Naive thymus-derived CD4-positive, alpha-beta T cell (primary cell): ENCODE measurements at regions of chr2 and their contacts with region 1.

Region 1: GRCh38 chr2:7427293-7428060 is 510.3 kb downstream of the RNF144A start:
- DNase-seq: peak in 7 of 9 donors; percentile 37 to 73 (median 63)
- ATAC-seq: peak; percentile 70
- H3K4me3 ChIP-seq: no peak overlapping the region
- H3K4me3 Mint-ChIP-seq: peak overlapping the region in 6 of 10 donors; percentile 0 to 87 (median 38)
- H3K27ac ChIP-seq: no peak overlapping the region
- H3K27ac Mint-ChIP-seq: peak overlapping the region in 7 of 9 donors; percentile 3 to 98 (median 78)
- H3K4me1 ChIP-seq: peaks cover 0 to 29% of the 10 kb centered on the region in 2 donors
- H3K4me1 Mint-ChIP-seq: peaks cover 26 to 49% (median 46%) of the 10 kb centered on the region in 7 donors
- H3K27me3 ChIP-seq: no peaks in the 10 kb centered on the region
- H3K27me3 Mint-ChIP-seq: peaks cover 0 to 6% (median 3%) of the 10 kb centered on the region in 5 donors

Region 2: GRCh38 chr2:6877402-6878304 is 549.8 kb before region 1 on chr2 and contains the start of gene RSAD2:
- CTCF ChIA-PET with region 1: no interaction called
- POLR2A ChIA-PET with region 1: no interaction called
- intact Hi-C with region 1: no loop called
- DNase-seq: peak in 8 of 9 donors; percentile 29 to 73 (median 64)
- ATAC-seq: peak; percentile 85
- H3K4me3 ChIP-seq: peak within 1 kb of the TSS; percentile 58
- H3K4me3 Mint-ChIP-seq: peak within 1 kb of the TSS; percentile 80 to 97 (median 90)
- H3K27ac ChIP-seq: peak within 1 kb of the TSS; percentile 59
- H3K27ac Mint-ChIP-seq: peak within 1 kb of the TSS; percentile 80 to 98 (median 91)
- H3K4me1 ChIP-seq: peaks cover 20 to 50% of the 10 kb centered on the region in 2 donors
- H3K4me1 Mint-ChIP-seq: peaks cover 36 to 94% (median 78%) of the 10 kb centered on the region in 7 donors
- H3K27me3 ChIP-seq: no peaks in the 10 kb centered on the region
- H3K27me3 Mint-ChIP-seq: no peaks in the 10 kb centered on the region
- total RNA-seq, gene RSAD2: 5.0 to 72.6 (median 5.6) TPM

Region 3: DNA sequence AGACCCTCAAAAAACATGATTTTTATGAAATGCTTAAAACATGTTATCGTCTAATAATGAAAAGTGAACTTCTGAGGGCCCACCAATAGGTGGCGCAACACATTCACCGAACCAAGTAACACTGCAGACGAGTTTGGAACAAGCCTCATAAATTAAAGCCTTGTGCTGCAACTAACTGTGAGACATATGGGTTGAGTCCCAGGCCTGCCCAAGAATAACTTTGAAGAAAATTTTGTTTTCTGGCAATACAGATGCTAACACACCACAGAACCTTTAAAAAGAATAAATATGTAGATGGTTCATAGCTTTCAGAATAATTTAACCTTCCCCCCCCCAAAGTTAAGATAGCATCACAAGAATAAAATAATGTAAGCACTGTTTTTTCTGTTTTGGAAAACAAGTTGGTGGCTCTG is 224.4 kb before region 1 on chr2:
- CTCF ChIA-PET with region 1: interaction called, 5 read pairs
- POLR2A ChIA-PET with region 1: no interaction called
- intact Hi-C with region 1: loop called (anchors 1 to 5 kb)
- DNase-seq: peak; percentile 31 to 65 (median 55)
- ATAC-seq: peak; percentile 81
- H3K4me3 ChIP-seq: no peak overlapping the region
- H3K4me3 Mint-ChIP-seq: no peak overlapping the region
- H3K27ac ChIP-seq: no peak overlapping the region
- H3K27ac Mint-ChIP-seq: no peak overlapping the region
- H3K4me1 ChIP-seq: no peaks in the 10 kb centered on the region
- H3K4me1 Mint-ChIP-seq: peaks cover 0 to 6% (median 0%) of the 10 kb centered on the region in 7 donors
- H3K27me3 ChIP-seq: no peaks in the 10 kb centered on the region
- H3K27me3 Mint-ChIP-seq: no peaks in the 10 kb centered on the region

Region 4: DNA sequence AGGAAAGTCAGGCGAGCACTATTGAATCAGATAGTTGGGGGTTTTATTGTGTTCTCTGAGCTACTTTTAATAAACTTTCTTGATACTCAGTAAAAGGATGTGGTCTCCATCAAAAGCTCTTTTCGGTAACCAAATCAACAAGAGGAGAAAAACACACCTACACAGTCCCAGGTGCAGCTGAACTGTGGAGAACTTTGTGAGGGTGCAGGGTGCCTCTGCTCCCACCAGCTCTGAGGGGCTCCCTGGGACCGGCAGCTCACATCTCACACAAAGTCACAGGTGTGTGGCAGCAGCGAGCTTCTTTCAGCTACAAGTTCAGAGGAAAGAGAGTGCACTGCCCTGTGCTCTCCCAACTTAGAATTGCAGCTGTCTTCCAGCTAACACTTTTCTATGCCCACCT is 140.2 kb after region 1 on chr2:
- CTCF ChIA-PET with region 1: interaction called, 25 read pairs
- POLR2A ChIA-PET with region 1: interaction called, 15 read pairs
- intact Hi-C with region 1: loop called (anchors 1 to 2 kb)
- DNase-seq: peak; percentile 16 to 92 (median 79)
- ATAC-seq: peak; percentile 92
- H3K4me3 ChIP-seq: peak overlapping the region; percentile 14
- H3K4me3 Mint-ChIP-seq: peak overlapping the region; percentile 48 to 79 (median 72)
- H3K27ac ChIP-seq: peak overlapping the region; percentile 61
- H3K27ac Mint-ChIP-seq: peak overlapping the region; percentile 89 to 99 (median 96)
- H3K4me1 ChIP-seq: peaks cover 17 to 45% of the 10 kb centered on the region in 2 donors
- H3K4me1 Mint-ChIP-seq: peaks cover 30 to 72% (median 66%) of the 10 kb centered on the region in 7 donors
- H3K27me3 ChIP-seq: no peaks in the 10 kb centered on the region
- H3K27me3 Mint-ChIP-seq: no peaks in the 10 kb centered on the region

Region 5: GRCh38 chr2:7740114-7740513 is 312.6 kb after region 1 on chr2:
- CTCF ChIA-PET with region 1: interaction called, 17 read pairs
- POLR2A ChIA-PET with region 1: interaction called, 4 read pairs
- intact Hi-C with region 1: loop called in 1 of 2 experiments (anchors 1 kb)
- DNase-seq: peak in 2 of 9 donors; percentile 15 to 25
- ATAC-seq: no peak
- H3K4me3 ChIP-seq: no peak overlapping the region
- H3K4me3 Mint-ChIP-seq: no peak overlapping the region
- H3K27ac ChIP-seq: no peak overlapping the region
- H3K27ac Mint-ChIP-seq: peak overlapping the region in 5 of 9 donors; percentile 1 to 62 (median 7)
- H3K4me1 ChIP-seq: peaks cover 0 to 17% of the 10 kb centered on the region in 2 donors
- H3K4me1 Mint-ChIP-seq: peaks cover 0 to 31% (median 11%) of the 10 kb centered on the region in 7 donors
- H3K27me3 ChIP-seq: no peaks in the 10 kb centered on the region
- H3K27me3 Mint-ChIP-seq: peaks cover 0 to 3% (median 0%) of the 10 kb centered on the region in 5 donors

Region 6: GRCh38 chr2:8303322-8303832 is 875.9 kb after region 1 on chr2:
- CTCF ChIA-PET with region 1: no interaction called
- POLR2A ChIA-PET with region 1: no interaction called
- intact Hi-C with region 1: loop called in 1 of 2 experiments (anchors 2 kb)
- DNase-seq: peak in 8 of 9 donors; percentile 10 to 73 (median 54)
- ATAC-seq: peak; percentile 75
- H3K4me3 ChIP-seq: peak overlapping the region; percentile 34
- H3K4me3 Mint-ChIP-seq: peak overlapping the region in 9 of 10 donors; percentile 3 to 77 (median 50)
- H3K27ac ChIP-seq: no peak overlapping the region
- H3K27ac Mint-ChIP-seq: peak overlapping the region in 6 of 9 donors; percentile 15 to 85 (median 47)
- H3K4me1 ChIP-seq: peaks cover 14 to 53% of the 10 kb centered on the region in 2 donors
- H3K4me1 Mint-ChIP-seq: peaks cover 25 to 88% (median 39%) of the 10 kb centered on the region in 7 donors
- H3K27me3 ChIP-seq: no peaks in the 10 kb centered on the region
- H3K27me3 Mint-ChIP-seq: no peaks in the 10 kb centered on the region

Region 7: DNA sequence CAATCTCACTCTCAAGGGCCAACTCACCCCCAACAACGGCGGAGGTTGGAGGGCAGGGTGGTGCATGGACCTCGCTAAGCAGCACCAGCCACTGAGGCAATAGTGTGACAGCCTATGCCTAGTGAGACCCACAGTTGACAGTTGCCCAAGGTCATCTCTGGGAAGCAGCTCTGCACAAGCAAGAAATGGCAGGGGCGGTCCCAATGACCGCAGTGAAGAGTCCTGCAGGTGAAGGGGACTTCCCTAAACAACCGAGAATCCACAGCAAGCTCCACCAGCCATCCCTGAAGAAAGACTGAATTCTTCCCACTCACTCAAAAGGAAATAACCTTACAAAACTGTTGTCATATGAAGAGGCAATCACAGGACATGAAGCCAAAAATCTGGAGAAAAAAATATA is 941.0 kb after region 1 on chr2:
- CTCF ChIA-PET with region 1: no interaction called
- POLR2A ChIA-PET with region 1: no interaction called
- intact Hi-C with region 1: no loop called
- DNase-seq: no peak
- ATAC-seq: no peak
- H3K4me3 ChIP-seq: no peak overlapping the region
- H3K4me3 Mint-ChIP-seq: no peak overlapping the region
- H3K27ac ChIP-seq: no peak overlapping the region
- H3K27ac Mint-ChIP-seq: peak overlapping the region in 1 of 9 donors; percentile 33
- H3K4me1 ChIP-seq: no peaks in the 10 kb centered on the region
- H3K4me1 Mint-ChIP-seq: peaks cover 0 to 7% (median 0%) of the 10 kb centered on the region in 7 donors
- H3K27me3 ChIP-seq: no peaks in the 10 kb centered on the region
- H3K27me3 Mint-ChIP-seq: peaks cover 0 to 16% (median 0%) of the 10 kb centered on the region in 5 donors

Region 8: GRCh38 chr2:8761529-8762164 is 1334.2 kb after region 1 on chr2:
- CTCF ChIA-PET with region 1: no interaction called
- POLR2A ChIA-PET with region 1: no interaction called
- intact Hi-C with region 1: loop called in 1 of 2 experiments (anchors 1 kb)
- DNase-seq: peak in 4 of 9 donors; percentile 1 to 17 (median 10)
- ATAC-seq: no peak
- H3K4me3 ChIP-seq: no peak overlapping the region
- H3K4me3 Mint-ChIP-seq: no peak overlapping the region
- H3K27ac ChIP-seq: no peak overlapping the region
- H3K27ac Mint-ChIP-seq: no peak overlapping the region
- H3K4me1 ChIP-seq: no peaks in the 10 kb centered on the region
- H3K4me1 Mint-ChIP-seq: peaks cover 0 to 10% (median 0%) of the 10 kb centered on the region in 7 donors
- H3K27me3 ChIP-seq: no peaks in the 10 kb centered on the region
- H3K27me3 Mint-ChIP-seq: no peaks in the 10 kb centered on the region